ENCODE measurements at regions of chr2 and their contacts with region 1.

Region 1: DNA sequence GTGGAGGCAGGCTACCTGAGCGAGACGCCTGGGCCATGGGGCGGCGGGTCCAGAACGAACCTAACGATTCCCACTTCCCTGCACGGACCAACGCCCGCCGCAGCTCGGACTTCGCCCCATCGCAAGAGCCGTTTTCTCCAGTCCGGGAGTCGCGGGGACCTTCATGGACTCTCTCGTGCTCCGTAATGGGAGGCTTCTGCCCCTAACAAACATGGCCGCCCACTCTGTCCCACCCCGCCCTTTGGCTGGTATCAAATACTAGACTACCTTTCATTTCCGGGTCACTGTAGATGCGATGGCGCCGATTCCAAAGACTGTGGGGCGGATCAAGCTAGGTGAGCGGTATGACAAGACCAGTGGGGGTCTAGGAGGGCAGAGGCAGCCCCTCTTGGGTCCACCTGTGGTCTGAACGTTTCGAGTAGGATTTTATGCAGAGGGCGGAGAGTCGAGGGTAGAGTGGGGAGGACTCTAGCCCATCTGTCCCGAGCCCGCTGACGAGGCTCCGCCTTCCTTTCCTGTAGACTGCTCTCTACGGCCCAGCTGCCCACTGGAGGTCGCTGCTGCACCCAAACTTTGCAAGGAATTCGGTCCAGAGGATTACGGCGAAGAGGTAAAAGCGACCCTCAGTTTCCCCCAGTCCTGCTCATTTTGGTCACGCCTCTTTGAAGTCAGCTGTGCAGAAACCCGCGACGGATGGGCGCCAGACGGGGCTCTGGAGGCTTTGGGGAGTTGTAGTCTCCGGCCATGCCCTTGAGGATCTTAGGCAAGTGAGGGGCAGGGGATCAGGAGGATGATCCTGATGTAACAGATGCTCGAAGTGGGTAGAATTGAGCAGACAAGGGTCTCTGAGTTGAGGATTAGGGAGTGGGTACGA is at the starts of genes CCDC142 and TTC31:
- DNase-seq: peak; percentile 93 to 95 (median 94)
- H3K4me3 ChIP-seq: peak within 1 kb of the TSS; percentile 61 to 94 (median 86)
- H3K4me3 Mint-ChIP-seq: peak within 1 kb of the TSS; percentile 100
- H3K27ac ChIP-seq: peak within 1 kb of the TSS; percentile 84 to 90
- H3K27ac Mint-ChIP-seq: peak within 1 kb of the TSS; percentile 90 to 100 (median 99)
- H3K4me1 ChIP-seq: peaks cover 24 to 32% of the 10 kb centered on the region in 2 donors
- H3K4me1 Mint-ChIP-seq: peaks cover 29% of the 10 kb centered on the region
- H3K27me3 ChIP-seq: no peaks in the 10 kb centered on the region
- H3K27me3 Mint-ChIP-seq: peaks cover 0 to 2% (median 0%) of the 10 kb centered on the region in 3 donors
- CTCF ChIP-seq: peak; percentile 88
- polyA plus RNA-seq, gene CCDC142: 2.2 to 15.8 (median 3.7) TPM
- polyA plus RNA-seq, gene TTC31: 19.6 to 46.5 (median 21.3) TPM

Region 2: DNA sequence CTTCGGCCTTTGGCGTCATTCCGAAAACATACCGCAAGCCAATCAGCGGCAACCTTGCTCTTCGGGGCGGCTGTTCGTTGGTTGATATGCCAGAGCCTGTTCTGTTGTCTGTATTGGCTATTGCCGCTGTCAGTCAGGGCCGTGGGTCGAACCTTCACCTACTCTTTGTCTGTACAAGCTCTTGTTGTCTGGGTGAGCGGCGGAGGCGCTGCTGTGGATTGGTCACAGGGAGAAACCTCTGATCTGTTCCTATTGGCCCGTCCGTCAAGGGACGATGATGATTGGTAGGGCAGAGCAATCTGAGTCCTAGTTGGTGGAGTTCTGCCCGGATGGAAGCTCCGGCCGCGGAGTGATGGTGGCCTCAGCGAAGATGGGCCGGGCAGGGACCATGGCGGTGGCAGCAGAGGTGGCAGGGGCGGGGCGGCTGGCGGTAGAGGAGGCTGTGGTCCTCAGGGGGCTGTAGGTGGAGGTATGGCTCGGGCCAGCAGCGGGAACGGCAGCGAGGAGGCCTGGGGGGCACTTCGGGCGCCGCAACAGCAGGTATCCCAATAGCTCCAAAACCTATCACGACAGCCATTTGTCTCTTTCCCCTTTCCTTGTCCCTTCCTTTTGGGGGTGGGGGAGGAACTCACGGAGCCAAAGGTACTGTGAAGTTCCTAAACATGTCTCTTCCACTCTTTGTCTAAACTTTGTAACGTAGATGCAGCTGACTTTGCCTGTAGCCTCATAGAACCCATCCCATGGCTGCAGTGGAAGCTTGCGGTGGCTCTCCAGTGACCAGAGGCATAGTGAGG is 24.7 kb before region 1 on chr2 and contains the start of gene WBP1:
- intact Hi-C with region 1: loop called (anchors 1 to 2 kb)
- DNase-seq: peak; percentile 100
- H3K4me3 ChIP-seq: peak within 1 kb of the TSS; percentile 74 to 90 (median 80)
- H3K4me3 Mint-ChIP-seq: peak within 1 kb of the TSS; percentile 93 to 94
- H3K27ac ChIP-seq: peak within 1 kb of the TSS; percentile 81 to 92
- H3K27ac Mint-ChIP-seq: peak within 1 kb of the TSS; percentile 87 to 97 (median 94)
- H3K4me1 ChIP-seq: peaks cover 35 to 41% of the 10 kb centered on the region in 2 donors
- H3K4me1 Mint-ChIP-seq: peaks cover 46% of the 10 kb centered on the region
- H3K27me3 ChIP-seq: no peaks in the 10 kb centered on the region
- H3K27me3 Mint-ChIP-seq: peaks cover 0 to 2% (median 0%) of the 10 kb centered on the region in 3 donors
- CTCF ChIP-seq: no peak
- polyA plus RNA-seq, gene WBP1: 23.9 to 109 (median 31.0) TPM

Region 3: DNA sequence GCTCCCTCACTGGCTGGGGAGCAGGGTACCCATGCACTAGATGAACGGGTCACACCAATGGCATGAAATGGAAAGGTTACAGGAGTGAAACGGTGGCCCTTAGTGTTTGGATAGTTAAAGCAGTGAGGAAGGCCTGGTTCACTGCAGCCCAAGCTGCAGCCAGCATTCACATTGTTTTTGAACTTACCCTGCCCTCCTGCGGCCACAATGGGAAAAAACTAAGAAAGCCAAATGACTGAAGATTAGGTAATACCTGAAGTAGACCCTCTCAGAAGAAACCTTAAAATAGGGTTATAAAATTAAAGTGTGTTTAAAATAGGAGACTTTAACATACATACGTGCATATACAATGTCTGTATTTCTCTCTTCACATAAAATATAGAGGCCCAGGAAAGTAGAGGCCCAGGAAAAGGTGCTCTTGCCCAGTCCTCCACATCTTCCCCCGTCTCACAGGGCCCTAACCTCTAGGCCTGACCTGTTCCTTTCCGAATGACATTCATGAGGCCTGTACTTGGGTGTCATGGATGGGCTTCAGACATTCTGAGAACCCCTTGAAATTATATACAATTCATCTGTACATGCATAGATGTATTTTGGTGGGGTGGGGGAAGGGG is 104.7 kb after region 1 on chr2:
- intact Hi-C with region 1: loop called (anchors 2 kb)
- DNase-seq: peak; percentile 65 to 69 (median 69)
- H3K4me3 ChIP-seq: no peak overlapping the region
- H3K4me3 Mint-ChIP-seq: no peak overlapping the region
- H3K27ac ChIP-seq: no peak overlapping the region
- H3K27ac Mint-ChIP-seq: peak overlapping the region in 2 of 7 donors; percentile 46 to 69
- H3K4me1 ChIP-seq: peaks cover 31 to 37% of the 10 kb centered on the region in 2 donors
- H3K4me1 Mint-ChIP-seq: peaks cover 39% of the 10 kb centered on the region
- H3K27me3 ChIP-seq: no peaks in the 10 kb centered on the region
- H3K27me3 Mint-ChIP-seq: peaks cover 0 to under 1% (median 0%) of the 10 kb centered on the region in 3 donors
- CTCF ChIP-seq: peak; percentile 83